Esophagus muscularis mucosa (tissue), 4 donors: ENCODE measurements at regions of chr3 and their contacts with region 1.

Region 1: DNA sequence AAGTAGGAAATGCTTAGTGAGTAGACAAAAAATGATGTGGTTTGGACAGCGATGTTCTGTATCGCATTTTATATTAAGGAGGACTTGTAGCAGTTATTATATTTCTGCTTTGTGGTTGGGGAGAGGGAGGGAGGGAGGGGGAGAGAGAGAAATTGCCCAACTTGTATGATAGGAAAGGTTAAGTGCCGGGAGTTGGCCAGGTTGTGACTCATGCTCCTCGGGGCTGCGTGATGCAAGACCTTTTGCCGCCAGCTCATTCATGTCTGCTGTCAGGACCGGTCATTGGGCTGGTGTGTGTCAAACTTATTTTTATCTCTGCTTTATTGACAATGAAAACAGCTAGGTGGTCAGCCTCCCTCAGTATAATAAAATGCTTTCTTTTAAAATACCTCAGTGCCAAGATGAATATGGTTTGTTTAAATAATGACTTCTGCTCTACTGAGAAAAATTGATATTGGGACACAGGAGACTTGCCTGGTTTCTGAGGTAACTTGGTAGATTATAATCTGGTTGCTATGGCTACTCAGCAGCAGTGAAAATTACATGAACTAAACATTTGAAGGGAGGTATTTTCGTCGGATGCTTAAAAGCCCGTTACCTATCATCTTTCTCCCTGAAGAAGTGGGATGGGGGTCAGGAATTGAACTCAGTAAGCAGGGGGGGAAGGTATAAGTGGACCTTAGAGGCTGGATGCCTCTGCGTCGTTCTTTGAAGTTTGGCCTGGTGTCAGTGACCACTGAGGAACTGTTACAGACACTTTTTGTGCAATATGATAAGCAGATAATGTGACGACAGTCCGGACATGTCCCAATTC is 90.7 kb downstream of the FNDC3B start:
- DNase-seq: peak; percentile 97
- H3K4me3 ChIP-seq: no peak overlapping the region
- H3K27ac ChIP-seq: peak overlapping the region; percentile 60 to 83 (median 66)
- H3K4me1 ChIP-seq: peaks cover 63 to 84% (median 75%) of the 10 kb centered on the region in 4 donors
- H3K27me3 ChIP-seq: no peaks in the 10 kb centered on the region
- CTCF ChIP-seq: no peak
- EP300 ChIP-seq: no peak
- POLR2A ChIP-seq: no peak

Region 2: GRCh38 chr3:172201136-172201869 is 71.2 kb after region 1 on chr3:
- intact Hi-C with region 1: loop called (anchors 5 kb)
- DNase-seq: no peak
- H3K4me3 ChIP-seq: peak overlapping the region in 1 of 4 donors; percentile 11
- H3K27ac ChIP-seq: peak overlapping the region; percentile 67 to 81 (median 77)
- H3K4me1 ChIP-seq: peaks cover 48 to 56% (median 53%) of the 10 kb centered on the region in 4 donors
- H3K27me3 ChIP-seq: no peaks in the 10 kb centered on the region
- CTCF ChIP-seq: no peak
- EP300 ChIP-seq: no peak
- POLR2A ChIP-seq: no peak